B cell (primary cell): ENCODE measurements at regions of chr1 and their contacts with region 1.

Region 1: GRCh38 chr1:55277377-55278130 is 62.4 kb upstream of the USP24 start:
- DNase-seq: peak; percentile 89
- ATAC-seq: peak; percentile 89
- H3K4me3 ChIP-seq: peak overlapping the region in 3 of 5 experiments; percentile 13 to 45 (median 16)
- H3K4me3 Mint-ChIP-seq: peak overlapping the region; percentile 81
- H3K27ac ChIP-seq: no peak overlapping the region
- H3K27ac Mint-ChIP-seq: peak overlapping the region; percentile 77
- H3K4me1 ChIP-seq: peaks cover 16 to 17% of the 10 kb centered on the region in 2 donors
- H3K4me1 Mint-ChIP-seq: peaks cover 22% of the 10 kb centered on the region
- H3K27me3 ChIP-seq: no peaks in the 10 kb centered on the region
- H3K27me3 Mint-ChIP-seq: peaks cover 4% of the 10 kb centered on the region
- CTCF ChIP-seq: peak; percentile 87

Region 2: DNA sequence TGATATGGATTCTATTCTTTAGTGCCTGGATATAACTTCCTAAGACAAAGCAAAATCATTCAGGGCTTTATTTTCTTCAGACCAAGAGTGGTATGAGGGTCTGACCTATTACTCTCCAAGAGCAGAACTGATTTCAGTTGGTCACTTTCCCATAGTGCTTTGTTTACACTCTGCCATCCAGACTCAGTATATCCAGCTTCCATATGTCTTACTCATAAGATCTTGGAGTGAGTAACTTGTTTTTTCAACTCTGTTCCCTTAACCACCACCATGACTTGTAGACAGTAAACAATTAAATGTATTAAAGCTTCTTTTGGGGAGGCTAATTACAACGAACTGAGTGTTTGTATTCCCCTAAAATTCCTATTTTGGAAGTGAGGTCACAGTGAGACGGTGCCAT is 145.8 kb before region 1 on chr1:
- CTCF ChIA-PET with region 1: interaction called, 130 read pairs
- POLR2A ChIA-PET with region 1: interaction called, 6 read pairs
- intact Hi-C with region 1: no loop called
- DNase-seq: no peak
- ATAC-seq: no peak
- H3K4me3 ChIP-seq: no peak overlapping the region
- H3K4me3 Mint-ChIP-seq: no peak overlapping the region
- H3K27ac ChIP-seq: no peak overlapping the region
- H3K27ac Mint-ChIP-seq: no peak overlapping the region
- H3K4me1 ChIP-seq: no peaks in the 10 kb centered on the region
- H3K4me1 Mint-ChIP-seq: peaks cover 9% of the 10 kb centered on the region
- H3K27me3 ChIP-seq: no peaks in the 10 kb centered on the region
- H3K27me3 Mint-ChIP-seq: no peaks in the 10 kb centered on the region
- CTCF ChIP-seq: no peak

Region 3: DNA sequence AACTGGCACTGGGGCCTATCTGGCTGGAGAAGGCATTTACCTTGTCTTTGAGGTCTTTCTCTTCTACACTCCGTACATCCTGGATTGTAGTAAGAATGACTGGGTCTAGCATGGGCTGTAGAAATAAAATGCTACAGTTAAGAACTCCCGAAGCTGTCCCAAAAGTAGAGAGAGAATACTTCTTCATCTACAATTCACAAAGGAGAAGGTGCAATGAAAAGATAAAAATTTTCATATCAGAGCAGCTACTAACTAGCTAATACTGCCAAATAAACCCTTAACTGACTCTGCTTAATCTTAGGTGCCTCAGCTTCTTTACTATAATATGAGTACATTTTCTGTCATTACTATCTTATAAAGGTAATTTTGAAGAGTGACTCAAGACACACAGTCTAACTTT is 118.0 kb before region 1 on chr1:
- CTCF ChIA-PET with region 1: interaction called, 21 read pairs
- POLR2A ChIA-PET with region 1: no interaction called
- intact Hi-C with region 1: no loop called
- DNase-seq: no peak
- ATAC-seq: no peak
- H3K4me3 ChIP-seq: no peak overlapping the region
- H3K4me3 Mint-ChIP-seq: no peak overlapping the region
- H3K27ac ChIP-seq: peak overlapping the region in 1 of 2 donors; percentile 26
- H3K27ac Mint-ChIP-seq: no peak overlapping the region
- H3K4me1 ChIP-seq: no peaks in the 10 kb centered on the region
- H3K4me1 Mint-ChIP-seq: no peaks in the 10 kb centered on the region
- H3K27me3 ChIP-seq: no peaks in the 10 kb centered on the region
- H3K27me3 Mint-ChIP-seq: no peaks in the 10 kb centered on the region
- CTCF ChIP-seq: no peak

Region 4: DNA sequence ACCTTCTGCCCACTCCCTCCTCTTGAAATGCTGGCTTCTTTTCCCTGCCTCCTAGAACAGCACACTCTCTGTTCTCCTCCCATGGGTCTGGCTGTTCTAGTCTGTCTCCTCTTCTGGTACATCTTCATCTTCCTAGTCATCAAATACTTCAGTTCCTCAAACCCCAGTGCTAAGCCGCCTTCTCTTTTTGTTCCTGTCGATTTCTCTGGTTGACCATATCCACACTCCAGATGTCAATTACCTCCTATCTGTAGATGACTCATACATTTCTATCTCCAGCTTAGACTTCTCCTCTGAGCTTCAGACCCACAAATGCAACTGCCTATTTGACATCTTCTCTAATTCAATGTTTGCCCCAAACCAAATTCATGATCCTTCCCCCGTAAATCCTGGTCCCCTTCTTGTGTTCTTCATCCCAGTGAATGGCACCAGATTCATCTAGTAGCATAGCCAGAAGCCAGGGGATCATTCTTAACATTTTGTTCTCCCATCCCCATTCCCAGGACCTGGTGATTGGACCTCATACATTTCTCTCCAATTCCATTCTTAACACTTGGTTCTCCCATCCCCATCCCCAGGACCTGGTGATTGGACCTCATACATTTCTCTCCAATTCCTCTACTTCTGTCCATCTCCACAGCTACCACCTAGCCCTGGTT is 98.2 kb before region 1 on chr1:
- CTCF ChIA-PET with region 1: interaction called, 26 read pairs
- POLR2A ChIA-PET with region 1: interaction called, 8 read pairs
- intact Hi-C with region 1: no loop called
- DNase-seq: no peak
- ATAC-seq: no peak
- H3K4me3 ChIP-seq: no peak overlapping the region
- H3K4me3 Mint-ChIP-seq: no peak overlapping the region
- H3K27ac ChIP-seq: peak overlapping the region in 1 of 2 donors; percentile 52
- H3K27ac Mint-ChIP-seq: peak overlapping the region; percentile 0
- H3K4me1 ChIP-seq: peaks cover 0 to 7% of the 10 kb centered on the region in 2 donors
- H3K4me1 Mint-ChIP-seq: peaks cover 42% of the 10 kb centered on the region
- H3K27me3 ChIP-seq: no peaks in the 10 kb centered on the region
- H3K27me3 Mint-ChIP-seq: no peaks in the 10 kb centered on the region
- CTCF ChIP-seq: no peak

Region 5: GRCh38 chr1:55215256-55216021 is 62.1 kb before region 1 on chr1 and contains the start of gene USP24:
- CTCF ChIA-PET with region 1: interaction called, 111 read pairs
- POLR2A ChIA-PET with region 1: interaction called, 3 read pairs
- intact Hi-C with region 1: loop called (anchors 1 kb)
- DNase-seq: peak; percentile 90
- ATAC-seq: peak; percentile 74
- H3K4me3 ChIP-seq: peak within 1 kb of the TSS; percentile 72 to 83 (median 79)
- H3K4me3 Mint-ChIP-seq: peak within 1 kb of the TSS; percentile 98
- H3K27ac ChIP-seq: peak within 1 kb of the TSS; percentile 95 to 97
- H3K27ac Mint-ChIP-seq: peak within 1 kb of the TSS; percentile 99
- H3K4me1 ChIP-seq: peaks cover 54 to 59% of the 10 kb centered on the region in 2 donors
- H3K4me1 Mint-ChIP-seq: peaks cover 64% of the 10 kb centered on the region
- H3K27me3 ChIP-seq: no peaks in the 10 kb centered on the region
- H3K27me3 Mint-ChIP-seq: no peaks in the 10 kb centered on the region
- CTCF ChIP-seq: no peak
- total RNA-seq, gene USP24: 152 and 183 TPM in 2 replicates

Region 6: DNA sequence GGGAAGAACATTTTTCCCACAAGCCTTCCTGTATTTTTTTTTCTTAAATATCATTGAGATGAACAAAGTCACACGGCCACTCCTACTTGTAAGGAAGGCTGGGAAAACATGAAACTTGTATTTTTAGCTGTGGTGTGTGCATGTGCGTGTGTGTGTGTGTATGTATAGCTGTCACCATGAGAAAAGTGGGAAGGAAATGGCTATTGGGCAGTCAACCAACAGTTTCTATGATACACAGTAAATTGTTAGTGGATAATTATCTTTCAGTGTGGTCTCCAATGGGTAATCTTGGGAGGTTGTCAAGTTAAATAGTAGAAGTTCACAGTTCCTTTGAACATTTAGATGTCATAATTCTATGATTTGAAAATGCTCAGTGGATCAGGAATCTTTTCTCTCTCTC is 70.3 kb after region 1 on chr1:
- CTCF ChIA-PET with region 1: no interaction called
- POLR2A ChIA-PET with region 1: no interaction called
- intact Hi-C with region 1: no loop called
- DNase-seq: no peak
- ATAC-seq: no peak
- H3K4me3 ChIP-seq: no peak overlapping the region
- H3K4me3 Mint-ChIP-seq: no peak overlapping the region
- H3K27ac ChIP-seq: no peak overlapping the region
- H3K27ac Mint-ChIP-seq: no peak overlapping the region
- H3K4me1 ChIP-seq: no peaks in the 10 kb centered on the region
- H3K4me1 Mint-ChIP-seq: no peaks in the 10 kb centered on the region
- H3K27me3 ChIP-seq: no peaks in the 10 kb centered on the region
- H3K27me3 Mint-ChIP-seq: peaks cover 47% of the 10 kb centered on the region
- CTCF ChIP-seq: no peak

Region 7: DNA sequence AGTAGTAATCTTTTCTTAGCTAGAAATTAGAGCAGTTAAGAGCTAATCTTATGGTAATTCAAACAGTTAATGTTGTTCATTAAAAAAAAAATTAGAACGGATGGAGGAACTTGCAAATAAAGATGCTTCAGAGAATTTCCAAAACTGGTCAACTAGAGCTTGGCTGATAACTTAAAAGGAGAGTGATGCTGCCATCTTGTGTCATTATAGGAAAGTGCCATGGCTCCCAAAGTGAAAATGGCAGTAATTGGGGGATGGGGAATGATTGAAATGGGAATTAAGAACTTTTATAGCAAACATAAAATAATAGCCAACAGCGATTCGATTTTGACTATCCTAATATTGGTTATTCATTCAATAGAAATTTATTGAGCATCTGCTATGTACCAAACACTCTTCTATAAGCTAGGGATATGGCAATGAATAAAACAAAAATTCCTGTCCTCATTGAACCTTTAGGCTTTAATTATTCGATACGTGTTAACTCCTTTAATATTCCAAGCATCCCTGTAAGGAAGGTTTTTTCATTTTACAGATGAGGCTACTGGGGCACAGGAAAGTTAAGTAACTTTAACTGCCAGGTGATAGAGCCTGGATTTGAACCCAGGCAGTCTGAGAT is 1307.5 kb after region 1 on chr1:
- CTCF ChIA-PET with region 1: interaction called, 115 read pairs
- POLR2A ChIA-PET with region 1: interaction called, 6 read pairs
- intact Hi-C with region 1: no loop called
- DNase-seq: peak; percentile 71
- ATAC-seq: peak; percentile 64
- H3K4me3 ChIP-seq: no peak overlapping the region
- H3K4me3 Mint-ChIP-seq: no peak overlapping the region
- H3K27ac ChIP-seq: no peak overlapping the region
- H3K27ac Mint-ChIP-seq: no peak overlapping the region
- H3K4me1 ChIP-seq: peaks cover 0 to 2% of the 10 kb centered on the region in 2 donors
- H3K4me1 Mint-ChIP-seq: peaks cover 7% of the 10 kb centered on the region
- H3K27me3 ChIP-seq: no peaks in the 10 kb centered on the region
- H3K27me3 Mint-ChIP-seq: peaks cover 3% of the 10 kb centered on the region
- CTCF ChIP-seq: peak; percentile 98